ENCODE measurements at regions of chr19 and their contacts with region 1.

Region 1: GRCh38 chr19:2315818-2316353 is 7.9 kb upstream of the LINGO3 start:
- DNase-seq: peak in 4 of 5 donors; percentile 78 to 85 (median 79)
- H3K4me3 ChIP-seq: no peak overlapping the region
- H3K27ac ChIP-seq: no peak overlapping the region
- H3K4me1 ChIP-seq: peaks cover 0 to 3% (median 0%) of the 10 kb centered on the region in 3 donors
- H3K27me3 ChIP-seq: no peaks in the 10 kb centered on the region
- CTCF ChIP-seq: peak; percentile 63

Region 2: DNA sequence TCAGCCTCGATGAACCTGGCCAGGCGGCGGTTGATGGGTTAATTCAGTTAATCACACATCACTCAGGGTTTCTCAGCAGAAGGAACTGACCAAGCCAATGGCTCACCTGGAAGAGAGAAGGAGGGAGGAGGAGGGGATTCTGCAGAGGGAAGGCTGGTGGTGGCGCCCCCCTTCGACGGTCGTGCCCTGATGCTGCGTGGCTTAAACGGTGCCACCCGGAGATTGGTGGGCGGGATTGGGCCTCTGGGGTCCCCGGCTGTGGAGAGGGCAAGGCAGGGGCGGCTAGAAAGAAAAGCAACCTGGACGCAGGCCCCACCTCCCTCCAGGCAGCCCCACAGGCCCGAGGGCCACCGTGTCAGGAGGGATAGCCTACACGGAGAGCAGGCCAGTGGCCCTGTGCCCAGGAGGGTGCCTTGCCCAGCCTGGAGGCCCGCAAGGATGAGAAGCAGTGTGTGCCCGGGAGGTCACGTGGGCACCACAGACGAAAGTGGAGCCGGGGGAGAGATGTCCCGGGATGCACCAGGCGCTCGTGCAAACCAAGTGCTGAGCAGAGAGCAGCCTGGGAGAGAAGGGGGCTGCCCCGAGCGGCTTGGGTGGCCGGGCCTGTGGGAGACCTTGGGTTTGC is 358.9 kb before region 1 on chr19:
- intact Hi-C with region 1: no loop called
- DNase-seq: peak in 1 of 5 donors; percentile 63
- H3K4me3 ChIP-seq: no peak overlapping the region
- H3K27ac ChIP-seq: no peak overlapping the region
- H3K4me1 ChIP-seq: peaks cover 0 to 10% (median 2%) of the 10 kb centered on the region in 3 donors
- H3K27me3 ChIP-seq: no peaks in the 10 kb centered on the region
- CTCF ChIP-seq: no peak

Region 3: DNA sequence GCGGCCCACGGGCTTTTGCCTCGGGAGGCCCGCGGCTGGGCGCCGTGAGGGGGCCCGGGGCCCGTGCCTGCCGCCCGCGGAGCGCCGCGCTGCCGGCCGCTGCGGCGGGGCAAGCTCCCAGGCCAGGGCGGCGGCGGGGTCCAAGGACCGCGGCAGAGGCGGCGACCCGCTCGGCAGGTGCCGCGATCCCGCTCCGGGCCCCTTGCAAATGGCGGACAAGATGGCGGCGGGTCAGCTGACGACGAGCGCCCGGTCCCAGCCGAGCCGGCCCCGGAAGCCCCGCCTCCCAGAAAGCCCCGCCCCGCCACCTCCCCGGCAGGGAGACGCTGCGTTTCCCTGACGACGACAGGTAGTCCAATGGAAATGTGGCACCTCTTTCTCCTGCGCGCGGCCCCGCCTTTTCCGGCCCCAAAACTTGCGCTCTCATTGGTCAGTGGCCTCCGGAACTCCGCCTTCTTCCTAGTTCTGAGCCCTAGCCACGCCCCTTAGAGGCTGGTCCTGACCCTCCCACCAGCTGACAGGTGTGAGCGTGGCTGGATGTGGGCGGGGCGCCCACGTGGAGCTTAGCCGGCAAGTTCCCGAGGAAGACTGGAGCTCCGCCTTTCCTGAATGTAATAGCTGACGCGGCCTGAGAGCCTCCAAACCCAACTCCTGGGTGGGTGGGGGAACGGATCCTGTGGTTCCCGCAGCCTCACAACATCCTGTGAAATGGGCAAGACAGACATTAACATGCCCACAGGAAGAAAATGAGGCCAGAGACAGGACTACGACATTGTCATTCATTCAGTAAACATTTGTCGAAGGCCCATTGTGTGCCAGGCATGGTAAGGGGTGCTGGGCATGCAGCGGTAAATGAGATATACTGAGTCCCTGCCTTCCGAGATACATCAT is 164.3 kb before region 1 on chr19 and contains the start of gene AP3D1:
- intact Hi-C with region 1: loop called (anchors 10 kb)
- DNase-seq: peak; percentile 100
- H3K4me3 ChIP-seq: peak within 1 kb of the TSS; percentile 65 to 88 (median 86)
- H3K27ac ChIP-seq: peak within 1 kb of the TSS; percentile 80 to 87
- H3K4me1 ChIP-seq: peaks cover 3 to 21% (median 7%) of the 10 kb centered on the region in 3 donors
- H3K27me3 ChIP-seq: no peaks in the 10 kb centered on the region
- CTCF ChIP-seq: no peak
- total RNA-seq, gene AP3D1: 125 TPM

Region 4: GRCh38 chr19:2371656-2372055 is 55.8 kb after region 1 on chr19:
- intact Hi-C with region 1: no loop called
- DNase-seq: no peak
- H3K4me3 ChIP-seq: no peak overlapping the region
- H3K27ac ChIP-seq: no peak overlapping the region
- H3K4me1 ChIP-seq: no peaks in the 10 kb centered on the region
- H3K27me3 ChIP-seq: no peaks in the 10 kb centered on the region
- CTCF ChIP-seq: no peak

Region 5: DNA sequence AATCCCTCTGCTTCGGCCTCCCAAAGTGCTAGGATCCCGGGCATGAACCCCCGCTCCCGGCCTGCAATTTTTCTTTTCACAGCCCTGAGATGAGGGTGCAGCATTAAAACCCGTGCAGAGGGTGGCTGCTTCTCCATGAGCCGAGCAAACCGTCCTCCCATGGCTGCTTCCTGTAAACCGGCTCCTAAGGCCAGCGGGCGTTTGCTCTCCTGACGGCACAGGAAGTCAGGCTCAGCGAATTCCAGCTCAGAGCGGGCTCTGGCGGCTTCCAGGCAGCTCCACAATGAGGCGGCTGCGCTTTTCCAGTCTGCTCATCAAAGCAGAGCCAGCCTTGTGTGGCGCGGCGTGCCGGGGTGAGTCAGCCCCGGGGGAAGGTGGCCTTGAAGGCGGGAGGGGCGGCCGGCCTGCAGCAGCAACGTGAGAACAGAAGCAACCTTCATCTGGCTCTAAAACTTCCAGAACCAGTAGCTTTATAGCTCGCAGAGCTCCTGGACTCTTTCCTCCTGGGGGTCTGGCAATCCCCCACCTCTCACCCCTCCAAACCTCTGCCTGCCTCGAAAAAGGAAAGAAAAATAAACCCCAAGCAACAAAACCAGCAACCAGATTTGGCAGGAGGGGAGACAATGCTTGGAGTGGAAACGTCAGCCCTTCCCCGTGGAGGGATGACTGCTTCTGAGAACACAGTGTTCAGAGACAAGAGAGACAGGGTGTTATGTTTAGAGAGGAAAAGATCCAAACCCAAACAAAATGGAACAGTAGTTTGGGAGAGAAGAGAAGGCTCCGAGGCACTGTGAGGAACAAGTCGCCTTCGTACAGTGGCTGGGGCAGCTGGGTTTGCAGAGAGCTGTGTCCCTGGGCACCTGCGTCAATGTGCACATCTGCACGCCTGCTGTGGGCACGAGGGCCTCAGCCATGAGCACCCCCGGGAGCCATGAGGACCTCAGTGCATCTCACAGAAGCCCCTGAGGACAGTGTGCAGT is 227.9 kb after region 1 on chr19:
- intact Hi-C with region 1: no loop called
- DNase-seq: peak; percentile 95 to 98 (median 97)
- H3K4me3 ChIP-seq: peak overlapping the region in 2 of 3 donors; percentile 26 to 39
- H3K27ac ChIP-seq: peak overlapping the region; percentile 96 to 97
- H3K4me1 ChIP-seq: peaks cover 2 to 39% (median 24%) of the 10 kb centered on the region in 3 donors
- H3K27me3 ChIP-seq: no peaks in the 10 kb centered on the region
- CTCF ChIP-seq: peak; percentile 27

Measured in kidney (tissue), 22 donors.